SK-N-SH (cell line): ENCODE measurements at regions of chr1 and their contacts with region 1.

Region 1: GRCh38 chr1:156892190-156893047 is 1.1 kb upstream of the PEAR1 start:
- DNase-seq: peak; percentile 94
- H3K4me3 ChIP-seq: no peak overlapping the region; a peak in 1 of 4 replicates
- H3K27ac ChIP-seq: no peak overlapping the region
- H3K4me1 ChIP-seq: peaks cover 23 to 38% of the 10 kb centered on the region in 2 experiments; a peak in 3 of 4 replicates
- H3K27me3 ChIP-seq: no peaks in the 10 kb centered on the region
- CTCF ChIP-seq: peak; percentile 92
- EP300 ChIP-seq: no peak
- RAD21 ChIP-seq: peak; percentile 75

Region 2: GRCh38 chr1:156773607-156774006 is 118.8 kb before region 1 on chr1:
- CTCF ChIA-PET with region 1: interaction called, 20 read pairs
- POLR2A ChIA-PET with region 1: no interaction called
- DNase-seq: no peak
- H3K4me3 ChIP-seq: no peak overlapping the region
- H3K27ac ChIP-seq: peak overlapping the region; percentile 29 to 93; a peak in 3 of 4 replicates
- H3K4me1 ChIP-seq: peaks cover 27 to 41% of the 10 kb centered on the region in 2 experiments; a peak in 3 of 4 replicates
- H3K27me3 ChIP-seq: no peaks in the 10 kb centered on the region
- CTCF ChIP-seq: peak; percentile 18; the same call in 1 of the 2 replicates
- EP300 ChIP-seq: no peak
- RAD21 ChIP-seq: no peak

Region 3: GRCh38 chr1:156804572-156805243 is 87.7 kb before region 1 on chr1:
- CTCF ChIA-PET with region 1: interaction called, 294 read pairs
- POLR2A ChIA-PET with region 1: interaction called, 4 read pairs
- DNase-seq: peak; percentile 51
- H3K4me3 ChIP-seq: no peak overlapping the region
- H3K27ac ChIP-seq: peak overlapping the region; percentile 28 to 90; a peak in 3 of 4 replicates
- H3K4me1 ChIP-seq: peaks cover 24 to 76% of the 10 kb centered on the region in 2 experiments
- H3K27me3 ChIP-seq: no peaks in the 10 kb centered on the region
- CTCF ChIP-seq: no peak
- EP300 ChIP-seq: 0 out of 4 replicates have a peak, but pooled peaks of 1 of the 2 experiments have one; percentile 27
- RAD21 ChIP-seq: no peak

Region 4: DNA sequence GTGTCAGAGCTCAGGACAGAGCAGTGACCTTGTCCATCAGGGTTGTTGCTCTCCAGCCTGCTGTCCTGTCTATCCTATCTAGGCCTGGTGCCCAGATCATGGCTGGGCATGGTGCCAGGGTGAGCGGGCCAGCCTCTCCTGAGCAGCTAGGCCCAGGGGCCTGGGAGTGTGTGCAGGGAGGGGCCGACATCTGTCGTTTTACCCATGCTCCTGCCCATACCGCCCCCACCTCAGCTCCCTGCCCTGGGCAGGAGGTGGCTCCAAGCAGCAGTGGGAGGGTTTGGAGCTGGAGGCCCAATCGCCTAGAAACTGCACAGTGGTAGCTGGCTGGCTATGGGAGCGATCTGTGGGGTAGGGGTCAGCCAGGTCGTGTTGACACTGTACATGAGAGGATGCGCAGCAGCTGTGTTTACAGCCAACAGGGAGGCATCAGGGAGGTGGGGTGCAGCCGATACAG is 40.0 kb before region 1 on chr1:
- CTCF ChIA-PET with region 1: interaction called, 455 read pairs
- POLR2A ChIA-PET with region 1: no interaction called
- DNase-seq: peak; percentile 96
- H3K4me3 ChIP-seq: no peak overlapping the region
- H3K27ac ChIP-seq: peak overlapping the region in 1 of 2 experiments; percentile 94; a peak in 2 of 4 replicates
- H3K4me1 ChIP-seq: peaks cover 0 to 45% of the 10 kb centered on the region in 2 experiments; a peak in 3 of 4 replicates
- H3K27me3 ChIP-seq: peaks cover 6% of the 10 kb centered on the region; the same call in 1 of the 2 replicates
- CTCF ChIP-seq: no peak
- EP300 ChIP-seq: peak in 1 of 2 experiments; percentile 88; a peak in 2 of 4 replicates
- RAD21 ChIP-seq: peak; percentile 0; the same call in 1 of the 2 replicates

Region 5: GRCh38 chr1:156910309-156910782 is 17.9 kb after region 1 on chr1:
- CTCF ChIA-PET with region 1: interaction called, 110 read pairs
- POLR2A ChIA-PET with region 1: interaction called, 3 read pairs
- DNase-seq: peak; percentile 88
- H3K4me3 ChIP-seq: no peak overlapping the region; a peak in 1 of 4 replicates
- H3K27ac ChIP-seq: no peak overlapping the region
- H3K4me1 ChIP-seq: peaks cover 11 to 39% of the 10 kb centered on the region in 2 experiments; a peak in 3 of 4 replicates
- H3K27me3 ChIP-seq: no peaks in the 10 kb centered on the region
- CTCF ChIP-seq: peak; percentile 80
- EP300 ChIP-seq: no peak
- RAD21 ChIP-seq: peak; percentile 40

Region 6: DNA sequence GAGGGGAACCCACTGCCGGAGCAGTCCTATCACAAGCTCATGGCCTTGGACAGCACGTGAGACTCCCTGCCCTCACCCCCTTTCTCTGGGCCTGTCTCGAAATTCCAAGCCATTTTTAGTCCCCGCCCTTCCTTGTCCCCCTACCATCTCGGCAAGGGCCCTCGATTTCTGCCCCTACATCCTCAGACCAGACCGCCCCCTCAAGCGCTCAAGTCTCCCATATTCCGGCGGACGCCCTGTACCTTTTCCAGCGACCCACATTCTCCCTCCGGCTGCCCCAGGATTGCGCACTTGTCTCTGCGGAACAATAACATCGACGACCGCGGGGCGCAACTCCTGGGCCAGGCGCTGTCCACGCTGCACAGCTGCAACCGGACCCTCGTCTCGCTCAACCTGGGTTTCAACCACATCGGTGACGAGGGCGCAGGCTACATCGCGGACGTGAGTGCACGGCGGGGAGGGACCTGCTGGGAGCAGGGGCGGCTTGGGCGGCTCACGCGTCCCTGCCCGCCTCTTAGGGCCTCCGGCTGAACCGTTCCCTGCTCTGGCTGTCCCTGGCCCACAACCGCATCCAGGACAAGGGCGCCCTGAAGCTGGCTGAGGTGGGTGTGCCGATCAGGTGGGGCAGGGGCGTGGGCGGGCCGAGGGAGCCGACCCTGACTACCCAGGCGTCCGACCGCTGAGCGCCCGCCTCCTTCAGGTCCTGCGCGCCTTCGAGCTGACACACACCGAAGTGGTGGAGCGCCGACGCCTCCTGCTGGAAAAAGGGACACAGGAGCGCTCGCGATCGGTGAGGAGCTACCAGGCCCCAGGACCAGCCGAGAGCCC is 35.0 kb after region 1 on chr1:
- CTCF ChIA-PET with region 1: interaction called, 308 read pairs
- POLR2A ChIA-PET with region 1: interaction called, 4 read pairs
- DNase-seq: peak; percentile 91
- H3K4me3 ChIP-seq: peak overlapping the region; percentile 37 to 44; a peak in 3 of 4 replicates
- H3K27ac ChIP-seq: peak overlapping the region in 1 of 2 experiments; percentile 6; a peak in 1 of 4 replicates
- H3K4me1 ChIP-seq: peaks cover 5 to 25% of the 10 kb centered on the region in 2 experiments; a peak in 2 of 4 replicates
- H3K27me3 ChIP-seq: no peaks in the 10 kb centered on the region
- CTCF ChIP-seq: peak; percentile 84
- EP300 ChIP-seq: no peak
- RAD21 ChIP-seq: peak; percentile 94

Region 7: GRCh38 chr1:156936721-156937220 is 44.4 kb after region 1 on chr1:
- CTCF ChIA-PET with region 1: interaction called, 26 read pairs
- POLR2A ChIA-PET with region 1: no interaction called
- DNase-seq: no peak
- H3K4me3 ChIP-seq: no peak overlapping the region
- H3K27ac ChIP-seq: no peak overlapping the region
- H3K4me1 ChIP-seq: no peaks in the 10 kb centered on the region
- H3K27me3 ChIP-seq: no peaks in the 10 kb centered on the region
- CTCF ChIP-seq: no peak
- EP300 ChIP-seq: no peak
- RAD21 ChIP-seq: no peak